K562 (cell line): ENCODE measurements at regions of chr2 and their contacts with region 1.

Region 1: GRCh38 chr2:234500394-234501006 is 3.6 kb upstream of the ARL4C start:
- DNase-seq: peak in 2 of 4 experiments; percentile 15 to 23
- ATAC-seq: peak; percentile 65
- H3K4me3 ChIP-seq: no peak overlapping the region
- H3K27ac ChIP-seq: no peak overlapping the region
- H3K4me1 ChIP-seq: peaks cover 0 to 19% of the 10 kb centered on the region in 2 experiments; a peak in 2 of 5 replicates
- H3K27me3 ChIP-seq: peaks cover 0 to 13% of the 10 kb centered on the region in 2 experiments; a peak in 3 of 5 replicates
- CTCF ChIP-seq: peak; percentile 34 to 56 (median 35); a peak in 4 of 6 replicates
- EP300 ChIP-seq: no peak
- POLR2A ChIP-seq: no peak
- RAD21 ChIP-seq: peak; percentile 62

Region 2: DNA sequence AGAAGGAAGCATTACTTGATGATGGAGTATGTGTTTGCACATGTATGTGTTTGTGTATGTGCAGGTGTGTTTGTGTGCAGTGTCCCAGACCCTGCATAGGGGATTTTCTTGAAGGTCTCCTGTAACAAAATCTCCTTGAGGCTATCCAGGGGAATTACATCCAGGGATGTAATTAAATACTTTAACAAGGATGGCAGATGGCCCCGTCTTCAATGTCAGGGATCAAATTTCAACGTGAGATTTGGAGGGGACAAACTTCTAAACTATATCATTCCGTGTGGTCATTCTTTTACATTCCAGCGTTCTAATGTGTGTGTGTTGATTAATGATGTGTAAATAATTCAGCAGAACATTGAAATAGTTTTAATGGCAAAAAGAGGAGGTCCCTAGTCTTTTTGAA is 825.5 kb before region 1 on chr2:
- CTCF ChIA-PET with region 1: no interaction called
- POLR2A ChIA-PET with region 1: no interaction called
- in situ Hi-C with region 1: no loop called
- intact Hi-C with region 1: no loop called
- DNase-seq: no peak
- ATAC-seq: no peak
- H3K4me3 ChIP-seq: no peak overlapping the region
- H3K27ac ChIP-seq: no peak overlapping the region
- H3K4me1 ChIP-seq: no peaks in the 10 kb centered on the region
- H3K27me3 ChIP-seq: no peaks in the 10 kb centered on the region
- CTCF ChIP-seq: no peak
- EP300 ChIP-seq: no peak
- POLR2A ChIP-seq: no peak
- RAD21 ChIP-seq: no peak

Region 3: GRCh38 chr2:234288974-234289455 is 211.5 kb before region 1 on chr2:
- CTCF ChIA-PET with region 1: no interaction called
- POLR2A ChIA-PET with region 1: no interaction called
- in situ Hi-C with region 1: no loop called
- intact Hi-C with region 1: loop called (anchors 5 kb)
- DNase-seq: peak; percentile 48 to 68 (median 64)
- ATAC-seq: peak; percentile 86
- H3K4me3 ChIP-seq: no peak overlapping the region
- H3K27ac ChIP-seq: no peak overlapping the region
- H3K4me1 ChIP-seq: no peaks in the 10 kb centered on the region; a peak in 1 of 5 replicates
- H3K27me3 ChIP-seq: no peaks in the 10 kb centered on the region
- CTCF ChIP-seq: peak; percentile 62 to 71 (median 66)
- EP300 ChIP-seq: no peak
- POLR2A ChIP-seq: no peak
- RAD21 ChIP-seq: peak; percentile 54 to 55